AG04450 (cell line): ENCODE measurements at regions of chr13 and their contacts with region 1.

Region 1: DNA sequence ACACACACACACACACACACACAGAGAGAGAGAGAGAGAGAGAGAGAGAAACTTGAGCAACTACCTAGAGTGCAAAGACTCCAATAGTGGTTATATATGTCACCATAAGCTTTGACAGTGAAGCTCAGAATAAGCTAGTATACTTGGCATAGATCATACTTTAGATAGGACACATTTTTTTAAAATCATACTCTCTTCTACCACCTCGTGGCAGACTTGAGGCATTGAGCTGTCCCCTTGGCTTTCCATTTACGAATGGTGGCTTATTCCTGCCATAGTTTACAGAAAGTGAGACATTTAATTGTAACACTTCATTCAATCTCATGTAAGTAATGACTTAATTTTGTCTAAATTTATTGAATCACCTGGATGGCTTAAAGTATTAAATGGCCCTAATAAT is 108.2 kb downstream of the EDNRB start:
- DNase-seq: no peak
- H3K4me3 ChIP-seq: no peak overlapping the region
- H3K27ac ChIP-seq: no peak overlapping the region
- H3K27me3 ChIP-seq: no peaks in the 10 kb centered on the region
- CTCF ChIP-seq: peak; percentile 65

Region 2: DNA sequence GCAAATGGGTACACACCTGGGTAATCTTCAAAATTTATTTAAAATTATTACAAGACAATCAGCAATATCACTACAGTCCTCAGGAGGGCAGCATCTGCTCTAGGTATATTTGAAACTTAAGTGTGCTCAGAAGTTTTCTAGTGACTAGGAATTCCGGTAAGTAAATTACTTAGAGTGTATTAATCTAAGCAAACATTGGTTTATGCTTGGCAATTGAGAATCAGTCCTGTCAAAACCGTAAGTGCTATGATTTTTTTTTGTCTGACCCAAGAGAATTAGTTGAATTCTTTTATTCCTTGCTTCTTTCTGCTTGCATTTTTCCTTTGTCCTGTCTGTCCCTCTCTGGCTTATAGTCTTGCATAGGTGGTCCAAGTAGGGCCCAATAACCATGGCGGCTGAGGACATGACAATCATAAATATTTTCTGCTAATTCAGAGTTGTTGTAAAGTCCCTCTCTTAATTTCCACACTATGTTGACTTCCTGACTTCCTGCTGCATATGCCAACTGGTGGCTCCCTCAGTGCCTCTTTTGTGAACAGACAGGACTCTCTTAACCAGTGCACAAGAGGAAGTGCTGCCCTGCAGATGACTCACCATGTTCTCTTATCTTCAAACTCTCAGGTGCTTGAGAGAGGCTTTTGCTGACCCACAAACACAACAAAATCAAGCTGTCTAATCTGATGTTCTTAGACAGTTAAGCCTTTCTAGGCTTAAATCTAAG is 30.7 kb before region 1 on chr13:
- CTCF ChIA-PET with region 1: interaction called, 12 read pairs
- POLR2A ChIA-PET with region 1: no interaction called
- DNase-seq: peak; percentile 55
- H3K4me3 ChIP-seq: no peak overlapping the region
- H3K27ac ChIP-seq: no peak overlapping the region
- H3K27me3 ChIP-seq: no peaks in the 10 kb centered on the region
- CTCF ChIP-seq: peak; percentile 65